Gastrocnemius medialis (tissue), 4 donors: ENCODE measurements at regions of chr7 and their contacts with region 1.

Region 1: GRCh38 chr7:113118074-113118959 is at the start of gene SMIM30:
- DNase-seq: peak; percentile 92 to 93
- ATAC-seq: peak; percentile 98 to 100
- H3K4me3 ChIP-seq: peak within 1 kb of the TSS; percentile 69 to 76 (median 72)
- H3K27ac ChIP-seq: peak within 1 kb of the TSS; percentile 81 to 88 (median 84)
- H3K4me1 ChIP-seq: peaks cover 12 to 17% of the 10 kb centered on the region in 2 donors
- H3K27me3 ChIP-seq: no peaks in the 10 kb centered on the region
- CTCF ChIP-seq: no peak
- POLR2A ChIP-seq: peak; percentile 96
- total RNA-seq, gene SMIM30: 55.9 to 98.8 (median 73.0) TPM

Region 2: GRCh38 chr7:112481833-112482670 is 636.3 kb before region 1 on chr7:
- in situ Hi-C with region 1: no loop called
- intact Hi-C with region 1: loop called (anchors 1 kb)
- DNase-seq: peak; percentile 86 to 95
- ATAC-seq: peak; percentile 87 to 90
- H3K4me3 ChIP-seq: peak overlapping the region; percentile 16 to 32 (median 30)
- H3K27ac ChIP-seq: peak overlapping the region; percentile 87 to 96 (median 92)
- H3K4me1 ChIP-seq: peaks cover 43 to 53% of the 10 kb centered on the region in 2 donors
- H3K27me3 ChIP-seq: no peaks in the 10 kb centered on the region
- CTCF ChIP-seq: peak in 1 of 5 experiments; percentile 12
- POLR2A ChIP-seq: peak; percentile 80 to 91

Region 3: DNA sequence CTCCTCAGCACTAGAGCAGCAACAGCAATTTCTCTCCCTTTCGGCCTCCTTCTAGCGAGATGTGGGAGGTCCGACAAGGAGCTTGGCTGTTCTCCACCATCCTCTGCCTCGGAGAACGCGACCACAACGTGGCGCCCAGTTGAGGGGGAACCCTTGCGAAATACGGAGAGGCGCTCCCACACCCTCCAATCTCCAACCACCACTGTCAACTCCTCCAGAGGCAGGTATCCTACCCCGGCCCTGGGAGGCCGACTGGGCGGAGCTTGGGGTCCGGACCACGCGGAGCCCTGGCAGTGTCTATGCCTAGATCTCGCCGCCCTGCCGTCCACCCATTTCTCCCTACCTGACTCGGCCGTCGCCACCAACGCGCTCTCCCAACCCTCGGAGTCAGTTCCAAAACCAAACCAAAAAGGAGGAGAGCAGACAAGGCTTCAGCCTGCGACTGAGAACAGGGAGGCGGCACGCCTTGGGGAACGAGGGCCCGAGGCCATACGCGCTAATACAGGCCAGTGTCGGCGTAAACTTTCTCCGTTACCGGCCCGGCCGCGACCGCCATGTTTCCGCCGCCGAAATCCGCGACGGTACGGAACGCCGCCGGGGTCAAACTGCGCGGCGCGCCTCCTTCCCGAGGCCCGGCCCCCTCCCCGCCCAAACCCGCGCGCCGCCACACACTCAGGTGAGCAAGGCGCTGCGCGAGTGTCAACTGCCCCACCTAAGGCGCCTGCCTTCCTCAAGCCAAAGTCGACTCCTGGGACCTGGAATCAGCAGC is 328.3 kb before region 1 on chr7 and contains the start of gene TMEM168:
- in situ Hi-C with region 1: no loop called
- intact Hi-C with region 1: loop called (anchors 5 kb)
- DNase-seq: peak; percentile 43 to 64
- ATAC-seq: peak; percentile 81 to 88
- H3K4me3 ChIP-seq: peak within 1 kb of the TSS; percentile 82 to 98 (median 94)
- H3K27ac ChIP-seq: peak within 1 kb of the TSS; percentile 83 to 90 (median 88)
- H3K4me1 ChIP-seq: peaks cover 8 to 20% of the 10 kb centered on the region in 2 donors
- H3K27me3 ChIP-seq: no peaks in the 10 kb centered on the region
- CTCF ChIP-seq: no peak
- POLR2A ChIP-seq: peak; percentile 28 to 32
- total RNA-seq, gene TMEM168: 6.0 to 10.9 (median 6.2) TPM

Region 4: DNA sequence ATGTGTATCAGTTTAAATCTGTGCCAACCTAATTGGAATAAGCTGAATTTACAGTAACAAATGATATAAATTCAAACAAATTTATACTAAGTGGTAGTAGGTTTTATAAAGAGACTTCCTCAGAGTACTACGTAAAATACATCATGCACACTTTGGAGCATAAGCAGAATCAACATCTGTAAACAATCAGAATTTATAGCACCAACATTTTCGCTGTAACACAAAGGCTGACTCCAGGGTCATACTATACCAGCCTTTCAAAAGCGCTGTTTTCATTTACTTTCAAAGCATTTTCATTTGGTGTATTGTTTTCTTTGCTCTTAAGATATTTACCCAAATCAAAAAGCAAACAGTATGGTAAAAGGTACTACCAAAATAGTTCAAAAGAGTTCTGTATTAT is 298.8 kb before region 1 on chr7:
- in situ Hi-C with region 1: no loop called
- intact Hi-C with region 1: no loop called
- DNase-seq: no peak
- ATAC-seq: no peak
- H3K4me3 ChIP-seq: no peak overlapping the region
- H3K27ac ChIP-seq: no peak overlapping the region
- H3K4me1 ChIP-seq: no peaks in the 10 kb centered on the region
- H3K27me3 ChIP-seq: no peaks in the 10 kb centered on the region
- CTCF ChIP-seq: no peak
- POLR2A ChIP-seq: no peak

Region 5: GRCh38 chr7:112939574-112940314 is 178.6 kb before region 1 on chr7:
- in situ Hi-C with region 1: loop called in 2 of 4 experiments (anchors 10 to 25 kb)
- intact Hi-C with region 1: loop called (anchors 5 kb)
- DNase-seq: peak; percentile 99
- ATAC-seq: peak; percentile 98 to 99
- H3K4me3 ChIP-seq: peak overlapping the region; percentile 85 to 90 (median 88)
- H3K27ac ChIP-seq: peak overlapping the region; percentile 81 to 88 (median 85)
- H3K4me1 ChIP-seq: peaks cover 15 to 21% of the 10 kb centered on the region in 2 donors
- H3K27me3 ChIP-seq: no peaks in the 10 kb centered on the region
- CTCF ChIP-seq: no peak
- POLR2A ChIP-seq: peak; percentile 36 to 72

Region 6: GRCh38 chr7:113698556-113699220 is 580.4 kb after region 1 on chr7:
- in situ Hi-C with region 1: no loop called
- intact Hi-C with region 1: loop called (anchors 5 kb)
- DNase-seq: no peak
- ATAC-seq: no peak
- H3K4me3 ChIP-seq: no peak overlapping the region
- H3K27ac ChIP-seq: no peak overlapping the region
- H3K4me1 ChIP-seq: peaks cover 0 to 22% of the 10 kb centered on the region in 2 donors
- H3K27me3 ChIP-seq: no peaks in the 10 kb centered on the region
- CTCF ChIP-seq: peak; percentile 49 to 76 (median 61)
- POLR2A ChIP-seq: no peak

Region 7: GRCh38 chr7:113710310-113711106 is 592.2 kb after region 1 on chr7:
- in situ Hi-C with region 1: no loop called
- intact Hi-C with region 1: loop called (anchors 5 kb)
- DNase-seq: peak in 1 of 2 donors; percentile 14
- ATAC-seq: peak; percentile 47 to 74
- H3K4me3 ChIP-seq: no peak overlapping the region
- H3K27ac ChIP-seq: no peak overlapping the region
- H3K4me1 ChIP-seq: peaks cover 6 to 15% of the 10 kb centered on the region in 2 donors
- H3K27me3 ChIP-seq: no peaks in the 10 kb centered on the region
- CTCF ChIP-seq: peak; percentile 61 to 86 (median 65)
- POLR2A ChIP-seq: no peak